Right lobe of liver (tissue), 6 donors: ENCODE measurements at regions of chr3 and their contacts with region 1.

Region 1: DNA sequence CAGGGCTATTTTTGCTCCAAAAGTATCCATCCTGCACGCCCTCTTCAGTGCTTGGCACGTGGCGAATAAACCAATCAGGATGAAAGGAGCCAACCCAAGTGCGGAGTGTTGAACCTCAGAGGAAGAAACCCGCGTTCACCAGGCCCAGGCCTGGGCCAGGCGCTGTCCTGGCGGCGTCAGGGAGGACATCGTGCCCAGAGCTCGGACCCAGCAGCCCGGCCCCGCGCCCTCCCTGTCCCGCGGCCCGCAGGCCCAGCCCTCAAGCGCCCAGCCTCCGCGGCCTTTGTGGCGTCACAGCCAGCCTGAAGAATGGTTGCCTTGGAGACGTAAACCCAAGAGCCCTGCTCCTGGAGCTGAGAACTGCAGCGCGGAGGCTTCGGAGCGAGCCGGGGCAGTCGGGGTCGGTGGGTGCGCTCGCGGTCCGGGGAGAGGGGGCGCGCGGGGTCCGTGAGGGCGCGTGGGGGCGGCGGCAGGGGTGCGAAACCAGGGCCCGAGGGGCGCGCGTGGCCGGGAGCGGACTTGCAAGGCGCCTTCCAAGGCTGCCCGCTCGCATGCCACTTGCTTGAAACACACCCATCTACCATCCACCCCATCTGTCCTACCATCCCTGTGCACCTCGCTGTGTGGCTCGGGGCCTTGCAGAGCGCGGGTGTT is at the start of gene CFAP100:
- DNase-seq: peak in 1 of 3 donors; percentile 39
- ATAC-seq: no peak
- H3K4me3 ChIP-seq: no peak within 1 kb of the TSS
- H3K27ac ChIP-seq: no peak within 1 kb of the TSS
- H3K4me1 ChIP-seq: no peaks in the 10 kb centered on the region
- H3K27me3 ChIP-seq: no peaks in the 10 kb centered on the region
- CTCF ChIP-seq: no peak
- POLR2A ChIP-seq: no peak
- total RNA-seq, gene CFAP100: not detected

Region 2: DNA sequence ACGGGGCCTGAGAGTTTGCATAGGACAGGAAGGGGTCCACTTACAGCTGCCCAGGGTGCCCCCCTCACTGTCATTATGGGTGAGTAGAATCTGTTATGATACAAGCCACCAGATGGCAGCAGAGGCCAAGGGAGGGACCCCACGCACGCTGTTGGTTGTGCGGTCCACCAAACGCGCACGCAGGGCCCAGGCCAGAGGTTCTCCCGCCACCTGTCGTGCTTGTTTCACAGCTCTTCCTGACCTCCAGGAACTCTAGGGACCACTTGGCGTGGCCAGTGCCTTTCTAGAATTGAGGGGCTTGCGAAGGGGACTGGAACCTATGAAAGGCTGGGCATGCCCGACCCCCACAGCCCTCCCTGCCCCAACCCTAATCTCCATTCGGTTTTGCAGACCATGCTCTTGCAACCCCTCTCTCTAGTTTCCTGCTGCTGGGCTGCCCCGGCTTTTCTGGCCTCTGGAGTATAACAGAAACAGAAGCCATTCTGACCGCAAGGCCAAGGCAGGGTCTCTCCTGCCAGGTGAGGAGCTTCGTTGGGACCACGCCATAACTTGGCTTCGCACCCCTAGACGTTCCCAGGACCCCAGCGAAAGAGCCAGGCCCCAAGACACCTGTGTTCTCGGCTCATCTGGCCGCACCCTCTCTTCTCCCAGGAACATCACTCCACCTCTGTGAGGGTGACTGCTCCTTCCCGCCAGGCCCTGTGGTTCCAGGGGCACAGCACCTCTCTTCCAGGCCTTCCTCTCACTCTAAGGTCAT is 260.3 kb before region 1 on chr3:
- intact Hi-C with region 1: loop called in 1 of 2 experiments (anchors 10 kb)
- DNase-seq: peak; percentile 41 to 57 (median 57)
- ATAC-seq: peak; percentile 11 to 69 (median 44)
- H3K4me3 ChIP-seq: no peak overlapping the region
- H3K27ac ChIP-seq: no peak overlapping the region
- H3K4me1 ChIP-seq: no peaks in the 10 kb centered on the region
- H3K27me3 ChIP-seq: no peaks in the 10 kb centered on the region
- CTCF ChIP-seq: peak; percentile 57 to 73 (median 64)
- POLR2A ChIP-seq: no peak

Region 3: DNA sequence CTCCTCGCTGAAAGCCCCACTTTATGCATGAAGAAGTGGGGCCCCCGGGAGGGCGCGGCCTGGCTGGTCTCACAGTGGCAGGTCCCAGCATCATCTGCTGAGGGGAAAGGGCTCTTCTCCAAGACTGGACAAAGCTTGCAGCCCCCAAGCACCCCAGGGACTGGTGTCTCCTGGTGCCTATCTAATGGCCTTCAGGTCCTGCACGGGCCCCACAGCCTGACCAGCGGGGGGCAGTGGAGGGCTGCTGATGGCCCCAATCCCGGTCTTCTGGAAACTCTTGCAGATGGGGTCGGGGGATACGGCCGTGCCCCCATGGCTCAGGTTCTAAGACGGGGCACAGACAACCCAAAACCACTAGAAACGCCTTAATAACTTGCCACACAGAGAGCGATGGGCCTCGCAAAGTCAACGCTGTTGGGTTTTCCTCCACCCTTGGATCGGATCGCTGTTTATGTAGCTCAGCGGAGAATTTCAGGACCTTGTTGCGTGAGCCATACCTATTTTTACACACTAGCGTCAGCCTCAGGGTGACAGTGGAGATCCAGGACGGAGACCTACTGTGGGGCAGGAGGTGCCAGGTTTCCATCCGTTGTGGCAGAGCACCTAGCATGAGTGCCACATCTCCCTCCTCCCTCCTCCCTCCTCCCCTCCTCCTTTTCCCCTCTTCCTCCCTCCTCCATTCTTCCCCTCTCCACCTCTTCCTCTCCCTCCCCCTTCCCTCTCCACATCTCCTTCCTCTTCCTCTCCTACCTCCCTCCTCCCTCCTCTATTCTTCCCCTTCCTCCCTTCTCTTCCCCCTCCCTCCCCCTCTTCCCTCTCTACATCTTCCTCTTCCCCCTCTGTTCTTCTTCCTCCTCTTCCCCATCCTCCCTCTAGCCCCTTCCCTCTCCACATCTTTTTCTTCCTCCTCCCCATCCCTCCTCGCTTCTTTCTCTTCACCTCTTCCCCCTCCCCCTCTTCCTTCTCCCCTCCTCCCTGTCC is 135.0 kb before region 1 on chr3:
- intact Hi-C with region 1: loop called in 1 of 2 experiments (anchors 10 kb)
- DNase-seq: peak; percentile 73 to 77 (median 75)
- ATAC-seq: peak; percentile 86 to 91 (median 89)
- H3K4me3 ChIP-seq: peak overlapping the region in 2 of 3 donors; percentile 36 to 48
- H3K27ac ChIP-seq: peak overlapping the region in 2 of 3 donors; percentile 55 to 78
- H3K4me1 ChIP-seq: peaks cover 0 to 12% (median 5%) of the 10 kb centered on the region in 4 donors
- H3K27me3 ChIP-seq: no peaks in the 10 kb centered on the region
- CTCF ChIP-seq: peak; percentile 79 to 96 (median 92)
- POLR2A ChIP-seq: no peak

Region 4: DNA sequence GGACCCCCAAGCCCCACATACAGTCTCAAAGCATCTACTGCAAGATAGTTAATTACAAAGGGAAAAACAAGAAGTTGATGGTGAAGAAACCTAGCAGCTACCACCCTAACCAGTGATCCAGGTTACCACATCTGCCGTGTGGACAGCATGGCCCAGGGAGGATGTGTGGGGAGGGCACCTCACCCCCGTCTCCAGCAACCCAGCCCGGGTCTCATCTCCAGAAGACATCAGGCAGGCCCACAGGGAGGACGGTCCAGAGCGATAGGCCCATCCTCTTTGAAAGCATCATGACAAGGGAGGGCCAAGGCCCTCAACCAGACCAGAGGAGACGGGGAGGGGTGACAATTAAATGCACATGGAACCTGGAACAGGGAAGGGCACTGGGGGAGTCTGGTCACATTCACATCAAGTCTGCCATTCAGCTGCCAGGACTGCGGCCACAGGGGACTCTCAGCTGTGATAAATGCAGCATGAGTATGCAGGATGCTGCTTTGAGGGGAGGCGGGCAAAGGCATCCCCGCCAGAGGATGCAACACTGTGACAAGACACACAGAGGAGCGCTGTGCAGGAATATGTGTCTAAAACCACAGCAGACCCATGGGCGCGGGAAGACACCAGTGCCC is 62.2 kb after region 1 on chr3:
- intact Hi-C with region 1: no loop called
- DNase-seq: peak in 2 of 3 donors; percentile 26 to 33
- ATAC-seq: no peak
- H3K4me3 ChIP-seq: no peak overlapping the region
- H3K27ac ChIP-seq: no peak overlapping the region
- H3K4me1 ChIP-seq: peaks cover 0 to 34% (median 12%) of the 10 kb centered on the region in 4 donors
- H3K27me3 ChIP-seq: no peaks in the 10 kb centered on the region
- CTCF ChIP-seq: no peak
- POLR2A ChIP-seq: no peak